HEK293 (cell line): ENCODE measurements at regions of chr15 and their contacts with region 1.

Region 1: DNA sequence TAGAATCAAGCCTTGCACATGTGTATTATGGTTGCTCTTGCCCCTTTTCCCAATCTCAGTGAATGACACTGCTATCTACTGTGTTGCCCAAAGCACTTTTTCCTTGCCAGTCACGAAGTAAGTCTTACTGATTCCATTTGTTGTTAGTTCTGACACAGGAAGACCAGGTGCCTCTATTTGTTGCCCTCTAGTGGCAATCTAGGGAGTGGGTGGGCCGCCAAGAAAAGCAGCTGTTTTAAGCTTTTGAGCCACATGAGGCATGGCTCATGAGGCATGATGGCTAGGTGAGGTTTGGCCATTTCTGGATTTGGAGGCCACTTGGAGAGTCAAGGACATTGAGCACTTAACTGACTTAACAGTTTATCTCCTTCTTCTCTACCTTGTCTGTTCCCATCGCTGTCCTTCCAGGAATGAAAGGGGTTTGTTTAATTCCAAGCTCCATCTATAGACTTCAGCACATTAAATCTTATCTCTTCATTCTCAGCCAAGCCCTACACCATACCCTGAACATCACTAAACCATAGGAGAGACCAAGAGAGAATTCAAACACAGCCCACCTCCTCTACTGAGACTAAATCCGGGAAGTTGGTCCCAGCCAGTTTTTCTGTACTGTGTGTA is 103.1 kb downstream of the HCN4 start:
- H3K4me3 ChIP-seq: no peak overlapping the region
- H3K27ac ChIP-seq: no peak overlapping the region
- H3K4me1 ChIP-seq: no peaks in the 10 kb centered on the region
- CTCF ChIP-seq: 0 out of 2 replicates have a peak, but pooled peaks have one; percentile 20

Region 2: DNA sequence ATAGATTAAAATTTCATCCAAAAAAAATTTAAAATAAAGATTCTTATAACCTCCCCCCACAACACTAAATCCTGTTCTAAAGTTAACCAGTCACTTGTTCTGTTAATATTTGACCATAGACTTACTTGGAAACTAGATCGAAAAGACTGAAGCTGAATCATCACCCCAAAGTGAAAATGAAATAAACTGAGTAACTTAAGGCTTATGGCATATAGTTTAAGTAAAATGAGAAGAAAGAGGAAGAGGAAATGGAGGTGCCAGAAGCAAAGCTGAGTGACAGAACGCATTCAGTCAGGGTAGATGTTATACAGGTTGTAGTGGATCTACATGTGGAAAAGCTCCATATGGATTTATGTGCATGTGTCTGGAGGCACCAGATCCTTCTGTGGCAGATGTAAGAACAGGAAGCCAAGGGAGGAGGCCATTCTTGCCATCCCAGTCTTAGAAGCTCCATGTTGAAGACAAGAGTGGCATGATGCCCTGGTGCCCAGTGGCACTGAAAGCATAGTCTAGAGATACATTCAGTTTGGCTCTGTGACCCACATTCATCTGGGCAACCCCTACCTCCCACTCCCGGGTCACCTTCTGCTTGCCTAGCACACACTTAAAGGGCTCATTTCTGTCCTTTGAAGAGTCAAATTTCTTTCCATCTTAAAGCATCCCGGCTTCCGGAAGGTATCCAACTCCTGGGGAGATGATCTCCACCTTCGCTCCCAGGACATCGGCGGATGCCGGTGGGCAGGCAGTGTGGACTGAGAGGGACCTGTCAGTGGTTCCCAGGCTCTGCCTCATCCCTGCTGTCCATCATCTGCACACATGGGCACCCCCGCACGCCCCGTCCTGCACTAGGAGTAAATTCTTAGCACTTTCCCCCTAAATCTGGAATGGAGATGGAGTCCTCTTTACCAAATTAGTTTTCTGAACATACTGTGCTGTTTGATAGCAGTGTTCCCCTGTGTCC is 122.6 kb before region 1 on chr15:
- CTCF ChIA-PET with region 1: no interaction called
- POLR2A ChIA-PET with region 1: no interaction called
- H3K4me3 ChIP-seq: no peak overlapping the region
- H3K27ac ChIP-seq: no peak overlapping the region
- H3K4me1 ChIP-seq: no peaks in the 10 kb centered on the region
- CTCF ChIP-seq: no peak

Region 3: GRCh38 chr15:73254598-73254997 is 11.0 kb before region 1 on chr15:
- CTCF ChIA-PET with region 1: interaction called, 23 read pairs
- POLR2A ChIA-PET with region 1: no interaction called
- H3K4me3 ChIP-seq: no peak overlapping the region
- H3K27ac ChIP-seq: no peak overlapping the region
- H3K4me1 ChIP-seq: no peaks in the 10 kb centered on the region
- CTCF ChIP-seq: no peak